ENCODE measurements at regions of chr11 and their contacts with region 1.

Region 1: DNA sequence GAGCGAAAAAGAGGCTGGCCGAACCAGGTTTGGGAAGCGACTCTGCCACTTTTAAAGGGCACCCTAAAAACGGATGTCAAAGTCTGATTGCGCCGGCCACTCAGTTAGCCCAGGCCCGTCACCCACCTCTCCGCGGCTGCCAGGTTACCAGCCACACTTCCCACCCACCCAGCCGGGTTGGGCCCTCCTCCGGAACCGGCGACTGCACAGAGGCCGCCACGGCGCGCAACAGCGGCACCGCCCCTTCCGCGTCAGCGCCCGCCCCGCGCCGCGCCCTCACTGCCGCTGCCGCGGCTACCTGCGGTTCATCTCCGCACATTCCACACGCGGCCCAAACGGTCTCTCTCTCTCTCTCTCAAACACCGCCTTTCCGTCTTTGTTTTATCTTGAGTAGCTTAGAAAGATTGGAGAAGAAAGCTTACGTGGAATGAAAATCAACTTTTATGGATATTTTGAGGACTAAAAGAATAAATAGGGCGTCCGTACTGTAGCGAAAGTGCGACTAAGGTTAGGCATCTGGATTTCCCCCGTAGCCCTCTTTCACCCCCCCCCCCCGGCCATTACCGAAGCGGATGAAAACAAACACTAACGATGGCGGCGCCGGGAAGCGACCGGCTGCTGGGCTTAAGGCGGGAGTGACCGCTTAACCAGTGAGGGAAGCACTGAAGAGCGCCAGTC is at the starts of genes ATG13 and HARBI1:
- DNase-seq: peak; percentile 95
- ATAC-seq: peak; percentile 96
- H3K4me3 Mint-ChIP-seq: peak within 1 kb of the TSS; percentile 89
- H3K27ac Mint-ChIP-seq: peak within 1 kb of the TSS; percentile 100
- H3K4me1 Mint-ChIP-seq: peaks cover 31% of the 10 kb centered on the region
- H3K27me3 Mint-ChIP-seq: no peaks in the 10 kb centered on the region
- total RNA-seq, gene ATG13: 39.4 to 56.4 TPM
- total RNA-seq, gene HARBI1: 2.3 to 2.7 TPM

Region 2: DNA sequence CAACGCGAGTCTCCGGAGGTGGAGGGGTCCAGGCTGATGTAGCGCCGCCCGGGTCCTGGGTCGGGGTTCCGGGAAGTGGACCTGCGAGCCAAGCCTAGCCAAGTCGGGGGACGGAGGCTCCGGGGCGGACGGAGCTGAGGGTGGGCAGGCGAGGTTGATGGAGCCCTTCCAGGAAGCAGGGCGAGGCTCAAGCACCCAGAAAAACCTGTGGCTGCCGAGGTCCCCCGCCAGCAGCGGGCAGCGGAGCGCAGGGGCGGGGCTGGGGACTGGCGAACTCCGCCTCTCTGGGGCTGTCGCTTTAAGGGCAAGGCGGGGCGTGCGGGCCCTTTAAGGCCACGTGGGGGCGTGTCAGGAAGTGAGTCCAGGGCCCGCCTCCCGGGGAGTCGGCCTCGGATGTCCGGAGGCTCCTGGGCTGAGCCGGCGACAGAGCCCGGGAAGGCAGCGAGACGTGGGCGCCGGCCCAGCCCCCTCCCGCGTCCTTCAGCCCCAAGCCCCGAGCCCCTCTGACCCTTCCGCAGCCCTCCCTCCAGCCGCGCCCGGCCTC is 812.3 kb before region 1 on chr11 and contains the start of gene SLC35C1:
- CTCF ChIA-PET with region 1: no interaction called
- POLR2A ChIA-PET with region 1: no interaction called
- intact Hi-C with region 1: loop called in 1 of 2 experiments (anchors 1 kb)
- DNase-seq: peak; percentile 98
- ATAC-seq: peak; percentile 97
- H3K4me3 Mint-ChIP-seq: peak within 1 kb of the TSS; percentile 91
- H3K27ac Mint-ChIP-seq: peak within 1 kb of the TSS; percentile 86
- H3K4me1 Mint-ChIP-seq: peaks cover 42% of the 10 kb centered on the region
- H3K27me3 Mint-ChIP-seq: no peaks in the 10 kb centered on the region
- total RNA-seq, gene SLC35C1: 9.6 to 9.8 TPM

Region 3: DNA sequence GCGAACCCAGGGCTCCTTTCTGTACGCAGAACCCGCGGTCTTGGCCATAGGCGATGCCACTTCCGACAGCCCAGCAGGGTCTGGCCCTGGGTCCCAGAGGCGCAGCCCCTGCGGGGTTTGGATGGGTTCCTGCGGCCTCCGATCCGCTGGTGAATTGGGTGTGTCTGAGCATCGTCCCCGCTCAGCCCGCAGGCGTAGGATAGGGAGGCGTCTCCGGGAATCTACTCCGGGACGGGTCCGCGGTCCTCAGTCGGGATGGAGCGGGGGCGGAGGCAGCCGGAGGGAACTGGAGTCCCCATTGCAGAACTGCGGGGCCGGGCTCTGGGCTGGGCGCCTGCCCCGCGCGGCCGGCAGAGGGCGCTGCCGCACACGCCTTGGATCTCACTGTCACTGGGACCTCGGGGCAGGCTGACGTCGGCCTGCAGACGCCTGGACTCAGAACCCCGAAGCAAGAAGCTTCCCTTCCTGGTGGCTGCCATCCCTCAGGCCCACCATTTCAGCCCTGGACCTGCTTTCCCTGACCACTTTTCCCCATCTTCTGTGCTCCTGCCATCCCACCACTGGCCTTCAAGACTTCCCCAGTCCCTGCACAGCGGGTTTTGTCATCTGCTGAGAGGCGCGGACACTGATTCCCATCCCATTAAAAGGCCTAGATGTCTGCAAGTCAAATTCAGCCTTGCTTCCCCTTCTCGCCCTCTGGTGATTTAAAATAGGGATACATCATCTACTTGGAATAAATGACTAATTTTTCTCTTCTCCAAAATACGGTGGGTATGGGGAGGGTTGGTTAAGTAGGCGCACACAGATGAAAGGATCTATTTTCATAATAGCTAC is 378.0 kb before region 1 on chr11:
- CTCF ChIA-PET with region 1: no interaction called
- POLR2A ChIA-PET with region 1: no interaction called
- intact Hi-C with region 1: loop called in 1 of 2 experiments (anchors 1 kb)
- DNase-seq: peak; percentile 90
- ATAC-seq: peak; percentile 70
- H3K4me3 Mint-ChIP-seq: peak overlapping the region; percentile 70
- H3K27ac Mint-ChIP-seq: peak overlapping the region; percentile 6
- H3K4me1 Mint-ChIP-seq: peaks cover 36% of the 10 kb centered on the region
- H3K27me3 Mint-ChIP-seq: peaks cover 11% of the 10 kb centered on the region

Region 4: GRCh38 chr11:46560300-46560991 is 56.7 kb before region 1 on chr11:
- CTCF ChIA-PET with region 1: interaction called, 3 read pairs
- POLR2A ChIA-PET with region 1: interaction called, 6 read pairs
- intact Hi-C with region 1: loop called in 1 of 2 experiments (anchors 2 kb)
- DNase-seq: peak; percentile 40
- ATAC-seq: peak; percentile 57
- H3K4me3 Mint-ChIP-seq: peak overlapping the region; percentile 65
- H3K27ac Mint-ChIP-seq: peak overlapping the region; percentile 90
- H3K4me1 Mint-ChIP-seq: peaks cover 64% of the 10 kb centered on the region
- H3K27me3 Mint-ChIP-seq: no peaks in the 10 kb centered on the region

Region 5: GRCh38 chr11:46936138-46937110 is 319.3 kb after region 1 on chr11 and contains the start of gene CSTPP1:
- CTCF ChIA-PET with region 1: no interaction called
- POLR2A ChIA-PET with region 1: no interaction called
- intact Hi-C with region 1: loop called in 1 of 2 experiments (anchors 2 kb)
- DNase-seq: peak; percentile 97
- ATAC-seq: peak; percentile 96
- H3K4me3 Mint-ChIP-seq: peak within 1 kb of the TSS; percentile 86
- H3K27ac Mint-ChIP-seq: peak within 1 kb of the TSS; percentile 88
- H3K4me1 Mint-ChIP-seq: peaks cover 16% of the 10 kb centered on the region
- H3K27me3 Mint-ChIP-seq: peaks cover 5% of the 10 kb centered on the region
- total RNA-seq, gene CSTPP1: 17.9 to 18.6 TPM

Region 6: GRCh38 chr11:47348859-47349258 is 731.7 kb after region 1 on chr11:
- CTCF ChIA-PET with region 1: no interaction called
- POLR2A ChIA-PET with region 1: no interaction called
- intact Hi-C with region 1: no loop called
- DNase-seq: peak; percentile 41
- ATAC-seq: no peak
- H3K4me3 Mint-ChIP-seq: no peak overlapping the region
- H3K27ac Mint-ChIP-seq: no peak overlapping the region
- H3K4me1 Mint-ChIP-seq: no peaks in the 10 kb centered on the region
- H3K27me3 Mint-ChIP-seq: no peaks in the 10 kb centered on the region

Region 7: DNA sequence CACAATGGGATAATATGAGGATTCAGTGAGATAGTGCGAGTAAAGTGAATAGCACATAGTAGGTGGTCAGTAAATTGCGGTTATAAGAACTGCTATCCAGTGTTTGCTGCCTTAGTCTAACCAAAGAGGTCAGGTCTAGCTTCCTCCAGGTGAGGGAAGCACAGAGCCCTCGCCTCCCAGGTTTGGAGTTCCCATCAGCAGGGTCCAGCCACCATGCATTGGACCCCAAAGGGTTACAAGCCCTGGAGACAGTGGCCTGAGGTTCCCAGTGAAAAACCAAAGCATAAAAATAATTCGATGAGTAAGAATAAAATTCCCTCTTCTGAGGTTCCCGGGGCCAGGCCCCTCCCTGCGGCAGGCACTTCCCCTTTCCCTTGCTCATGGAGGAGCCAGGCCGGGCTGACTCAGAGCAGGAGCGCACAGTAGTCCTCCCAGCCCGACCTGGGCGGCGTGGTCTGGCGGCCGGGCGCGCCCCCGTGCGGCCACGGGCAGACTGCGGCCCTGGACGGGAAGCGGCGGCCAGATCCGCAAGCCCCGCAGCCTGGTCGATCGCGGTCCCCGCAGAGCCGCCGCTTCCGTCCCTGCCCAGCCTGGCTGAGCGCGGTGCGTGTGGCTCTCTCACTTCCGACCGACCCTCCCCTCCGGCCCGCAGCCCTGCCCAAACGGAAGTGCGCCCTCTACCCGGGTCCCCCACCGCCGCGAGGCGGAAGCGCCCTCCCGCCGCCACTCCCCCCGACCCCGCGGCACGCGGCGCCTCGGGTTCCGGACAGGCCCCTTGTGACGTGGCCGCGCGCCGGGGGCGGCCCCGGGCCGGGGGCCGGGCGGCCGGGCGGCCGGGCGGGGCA is 790.8 kb after region 1 on chr11 and contains the start of gene SLC39A13:
- CTCF ChIA-PET with region 1: no interaction called
- POLR2A ChIA-PET with region 1: no interaction called
- intact Hi-C with region 1: loop called in 1 of 2 experiments (anchors 1 kb)
- DNase-seq: peak; percentile 95
- ATAC-seq: peak; percentile 91
- H3K4me3 Mint-ChIP-seq: peak within 1 kb of the TSS; percentile 89
- H3K27ac Mint-ChIP-seq: peak within 1 kb of the TSS; percentile 94
- H3K4me1 Mint-ChIP-seq: peaks cover 16% of the 10 kb centered on the region
- H3K27me3 Mint-ChIP-seq: no peaks in the 10 kb centered on the region
- total RNA-seq, gene SLC39A13: 8.6 to 10.7 TPM

Measured in activated CD4-positive, alpha-beta T cell treated with anti-CD3 and anti-CD28 coated beads for 36 hours (primary cell).